ENCODE measurements at regions of chr2 and their contacts with region 1.

Region 1: GRCh38 chr2:85302121-85302520 is 25.7 kb downstream of the TGOLN2 start:
- DNase-seq: no peak
- ATAC-seq: no peak
- H3K4me3 Mint-ChIP-seq: no peak overlapping the region
- H3K27ac Mint-ChIP-seq: no peak overlapping the region
- H3K4me1 Mint-ChIP-seq: peaks cover 5 to 23% (median 14%) of the 10 kb centered on the region in 4 donors
- H3K27me3 Mint-ChIP-seq: peaks cover 0 to 5% (median 0%) of the 10 kb centered on the region in 5 donors

Region 2: DNA sequence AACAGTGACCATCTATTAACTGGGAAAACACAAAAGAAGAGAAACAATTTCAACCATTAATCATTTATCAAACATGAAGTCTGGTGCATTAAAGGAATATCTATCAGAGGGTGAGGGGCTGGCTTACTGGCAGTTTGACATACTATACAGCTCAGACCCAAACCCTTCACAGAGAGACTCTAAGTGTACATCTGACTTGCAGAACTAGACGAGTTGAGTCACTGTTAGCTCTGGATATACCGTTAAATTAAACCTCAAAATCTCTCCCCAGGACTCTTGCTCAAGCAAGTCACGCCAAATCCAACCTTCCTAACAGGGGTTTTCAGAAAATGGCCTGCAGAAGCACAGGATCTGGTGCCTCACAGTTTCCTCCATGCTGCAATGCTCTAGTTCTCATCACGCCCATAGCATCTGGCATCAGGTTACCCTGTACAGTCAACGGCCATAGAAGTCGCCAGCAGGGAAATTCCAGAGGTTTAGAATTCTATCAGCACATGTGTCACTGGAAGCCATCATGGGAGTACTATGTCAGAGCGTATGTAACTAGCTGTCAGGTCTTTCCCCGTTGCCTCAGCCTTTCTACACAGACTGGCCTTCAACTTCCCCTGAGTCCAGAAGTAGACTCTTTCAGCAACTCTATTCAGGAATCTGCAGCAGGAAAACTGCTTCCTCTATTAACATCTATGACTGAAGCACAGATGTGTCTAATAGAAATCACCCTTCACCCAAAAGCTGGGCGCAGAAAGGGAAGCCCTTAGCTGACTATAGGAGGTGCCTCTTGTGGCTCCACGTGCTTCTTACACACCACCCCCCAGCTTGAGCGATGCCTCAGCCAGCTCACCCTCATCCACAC is 16.3 kb after region 1 on chr2:
- POLR2A ChIA-PET with region 1: interaction called, 10 read pairs
- DNase-seq: peak in 2 of 10 donors; percentile 20 to 33
- ATAC-seq: peak; percentile 74 to 79
- H3K4me3 Mint-ChIP-seq: peak overlapping the region; percentile 43 to 100 (median 72)
- H3K27ac Mint-ChIP-seq: peak overlapping the region; percentile 74 to 93 (median 84)
- H3K4me1 Mint-ChIP-seq: peaks cover 48 to 79% (median 71%) of the 10 kb centered on the region in 4 donors
- H3K27me3 Mint-ChIP-seq: no peaks in the 10 kb centered on the region

Region 3: GRCh38 chr2:85409845-85410583 is 107.9 kb after region 1 on chr2 and contains the start of gene CAPG:
- POLR2A ChIA-PET with region 1: no interaction called
- DNase-seq: peak in 4 of 10 donors; percentile 15 to 63 (median 30)
- ATAC-seq: peak in 1 of 2 donors; percentile 21
- H3K4me3 Mint-ChIP-seq: peak within 1 kb of the TSS; percentile 58 to 82 (median 72)
- H3K27ac Mint-ChIP-seq: peak within 1 kb of the TSS in 9 of 10 donors; percentile 31 to 80 (median 63)
- H3K4me1 Mint-ChIP-seq: peaks cover 30 to 87% (median 64%) of the 10 kb centered on the region in 4 donors
- H3K27me3 Mint-ChIP-seq: peaks cover 0 to 3% (median 0%) of the 10 kb centered on the region in 5 donors
- polyA plus RNA-seq, gene CAPG: 15.7 to 18.6 (median 16.8) TPM

Region 4: DNA sequence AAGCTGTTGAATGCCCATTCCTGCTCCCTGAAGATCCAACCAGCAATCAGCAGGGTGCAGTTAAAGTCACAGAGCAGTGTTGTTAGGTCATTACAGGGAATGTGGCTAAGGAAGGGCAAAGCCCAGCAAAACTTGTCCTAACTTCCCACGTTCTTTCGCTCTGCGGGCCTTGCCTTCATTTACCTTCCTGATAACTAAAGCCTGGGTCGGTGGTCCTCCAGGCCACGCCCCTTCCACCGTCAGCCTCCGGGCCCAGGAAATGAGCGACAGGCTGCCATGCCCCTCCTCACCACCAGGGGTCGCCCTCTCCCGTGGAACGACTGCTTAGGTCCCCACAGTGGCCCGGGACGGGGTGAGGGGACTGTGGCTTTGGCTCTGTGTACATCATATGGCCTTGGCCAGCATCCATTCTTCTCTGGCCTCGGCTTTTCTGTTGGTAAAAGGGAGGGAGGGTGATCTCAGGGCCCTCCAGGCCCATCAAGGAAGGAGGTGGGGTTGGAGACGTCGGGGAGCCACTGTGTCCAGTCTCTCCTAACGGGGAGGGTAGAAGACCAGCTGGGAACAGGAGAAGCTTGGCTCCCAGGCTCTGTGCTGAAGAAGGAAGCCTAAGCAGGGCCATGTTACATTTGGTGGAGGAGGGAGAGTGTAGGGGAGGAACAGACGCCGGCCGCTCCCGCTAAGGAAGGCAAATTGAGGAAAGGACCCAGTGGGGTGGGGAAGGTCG is 118.6 kb after region 1 on chr2:
- POLR2A ChIA-PET with region 1: no interaction called
- DNase-seq: peak; percentile 75 to 92 (median 85)
- ATAC-seq: peak; percentile 65 to 66
- H3K4me3 Mint-ChIP-seq: peak overlapping the region; percentile 46 to 84 (median 69)
- H3K27ac Mint-ChIP-seq: peak overlapping the region in 8 of 10 donors; percentile 68 to 95 (median 82)
- H3K4me1 Mint-ChIP-seq: peaks cover 8 to 28% (median 26%) of the 10 kb centered on the region in 4 donors
- H3K27me3 Mint-ChIP-seq: no peaks in the 10 kb centered on the region

Measured in naive thymus-derived CD8-positive, alpha-beta T cell (primary cell).